ENCODE measurements at regions of chr11 and their contacts with region 1.

Region 1: DNA sequence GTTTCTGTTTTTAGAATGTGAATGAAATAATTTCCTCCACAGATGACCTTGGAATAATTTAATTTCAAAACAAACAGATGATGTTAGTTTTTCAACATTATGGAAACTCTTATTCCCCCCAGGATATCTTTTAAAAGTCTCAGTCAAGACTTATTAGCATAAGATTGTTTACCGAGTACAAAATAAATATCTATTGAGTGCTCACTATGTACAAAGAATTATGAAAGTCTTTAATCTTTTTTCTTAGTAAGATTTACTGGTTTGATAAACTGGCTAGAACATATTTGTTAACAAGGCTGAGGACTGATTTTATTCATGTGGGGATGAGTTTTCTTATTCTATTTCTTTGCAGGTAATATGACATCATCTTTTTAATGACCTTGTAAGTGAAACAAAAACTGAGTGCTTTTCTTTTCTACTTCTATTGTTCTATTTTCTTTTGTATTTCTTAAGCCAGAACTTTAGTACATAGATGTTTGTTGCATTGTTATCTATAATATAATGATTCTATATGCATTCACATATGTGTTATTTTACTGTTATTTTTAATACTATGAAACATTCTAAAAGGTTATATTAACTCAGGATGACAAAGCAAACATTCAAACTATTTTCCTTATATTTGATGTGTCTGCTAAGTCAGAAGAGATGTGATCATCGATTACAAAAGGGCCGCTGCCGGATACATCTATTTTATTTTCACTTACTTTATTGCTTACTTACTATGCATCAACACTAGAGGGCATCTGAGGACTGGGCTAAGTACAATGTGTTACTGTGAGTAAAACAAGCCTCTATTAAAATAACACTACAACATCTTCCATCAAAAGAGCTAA is 111.0 kb upstream of the ARHGAP42 start:
- DNase-seq: no peak
- H3K4me3 ChIP-seq: no peak overlapping the region
- H3K27ac ChIP-seq: no peak overlapping the region
- H3K27me3 ChIP-seq: no peaks in the 10 kb centered on the region
- CTCF ChIP-seq: peak; percentile 90

Region 2: GRCh38 chr11:99960536-99960935 is 615.6 kb before region 1 on chr11:
- CTCF ChIA-PET with region 1: no interaction called
- POLR2A ChIA-PET with region 1: no interaction called
- DNase-seq: no peak
- H3K4me3 ChIP-seq: no peak overlapping the region
- H3K27ac ChIP-seq: no peak overlapping the region
- H3K27me3 ChIP-seq: no peaks in the 10 kb centered on the region
- CTCF ChIP-seq: no peak

Region 3: GRCh38 chr11:100592619-100593260 is 16.7 kb after region 1 on chr11:
- CTCF ChIA-PET with region 1: interaction called, 17 read pairs
- POLR2A ChIA-PET with region 1: no interaction called
- DNase-seq: peak; percentile 41
- H3K4me3 ChIP-seq: no peak overlapping the region
- H3K27ac ChIP-seq: peak overlapping the region; percentile 59
- H3K27me3 ChIP-seq: no peaks in the 10 kb centered on the region
- CTCF ChIP-seq: no peak

Region 4: DNA sequence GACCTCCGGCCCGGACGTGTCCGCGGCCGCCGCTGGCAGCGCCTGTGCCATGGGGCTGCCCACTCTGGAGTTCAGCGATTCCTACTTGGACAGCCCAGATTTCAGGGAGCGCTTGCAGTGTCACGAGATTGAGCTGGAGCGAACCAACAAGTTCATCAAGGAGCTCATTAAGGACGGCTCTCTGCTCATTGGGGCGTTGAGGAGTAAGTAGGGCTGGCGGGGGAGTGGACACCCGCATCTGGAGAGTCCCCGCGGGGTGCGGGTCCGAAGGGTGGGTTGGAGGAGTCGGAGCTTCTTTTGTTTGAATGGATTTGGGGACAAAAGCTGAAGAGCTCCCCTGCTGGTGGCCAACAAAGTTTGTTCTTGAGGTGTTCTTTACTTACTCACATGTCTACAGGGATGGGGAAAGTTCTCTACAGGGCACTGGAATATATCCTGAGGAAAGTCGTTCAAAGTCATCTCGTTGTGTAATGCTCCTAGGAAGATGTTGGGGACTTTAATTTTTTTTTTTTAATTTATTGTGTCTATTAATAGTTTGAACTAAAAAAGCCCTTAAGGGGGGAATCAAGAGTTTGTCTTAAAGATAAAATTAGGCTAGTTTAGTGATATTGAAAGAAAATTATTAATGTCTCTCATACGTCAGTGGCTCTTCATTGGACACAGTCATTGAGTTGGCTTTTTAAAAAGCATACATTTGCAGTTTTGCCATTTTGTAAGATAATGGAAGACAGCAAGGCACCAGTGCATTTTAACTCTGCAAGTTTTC is 111.7 kb after region 1 on chr11:
- CTCF ChIA-PET with region 1: interaction called, 93 read pairs
- POLR2A ChIA-PET with region 1: no interaction called
- DNase-seq: peak; percentile 45
- H3K4me3 ChIP-seq: peak overlapping the region; percentile 79
- H3K27ac ChIP-seq: peak overlapping the region; percentile 68
- H3K27me3 ChIP-seq: no peaks in the 10 kb centered on the region
- CTCF ChIP-seq: peak; percentile 81

Region 5: GRCh38 chr11:100855466-100856067 is 279.5 kb after region 1 on chr11:
- CTCF ChIA-PET with region 1: interaction called, 34 read pairs
- POLR2A ChIA-PET with region 1: no interaction called
- DNase-seq: no peak
- H3K4me3 ChIP-seq: no peak overlapping the region
- H3K27ac ChIP-seq: no peak overlapping the region
- H3K27me3 ChIP-seq: no peaks in the 10 kb centered on the region
- CTCF ChIP-seq: peak; percentile 64

Region 6: DNA sequence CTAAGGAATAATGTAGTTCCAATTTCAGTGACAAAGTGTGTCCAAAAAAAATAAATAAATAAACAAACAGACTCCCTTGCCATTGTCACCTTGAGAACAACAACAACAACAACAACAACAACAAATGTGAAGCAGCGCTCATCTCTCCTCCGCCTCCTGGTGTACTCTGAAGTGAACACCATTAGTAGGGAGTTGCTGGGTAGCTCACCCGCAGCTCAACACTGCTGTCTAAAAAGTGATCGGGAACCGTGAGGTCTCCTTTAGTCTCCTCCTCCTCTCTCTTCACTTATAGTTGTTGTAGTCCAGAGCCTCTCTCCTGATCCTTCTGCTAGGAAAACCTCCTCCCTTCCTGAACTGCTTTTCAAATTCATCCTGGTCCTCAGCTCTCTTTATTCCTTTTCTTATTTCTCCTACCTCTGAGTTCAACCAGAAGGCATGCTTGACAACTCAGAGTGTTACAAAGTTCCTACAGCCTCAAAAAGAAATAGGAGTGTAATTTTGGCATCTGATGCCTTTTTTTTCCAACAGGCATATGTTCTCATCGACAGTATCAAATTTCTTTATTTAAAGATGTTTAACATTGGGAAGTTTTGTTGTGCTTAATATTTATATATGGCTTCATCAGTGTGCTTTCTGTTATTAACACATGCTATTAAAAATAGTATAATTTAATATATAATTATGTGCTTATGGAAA is 338.5 kb after region 1 on chr11:
- CTCF ChIA-PET with region 1: interaction called, 11 read pairs
- POLR2A ChIA-PET with region 1: no interaction called
- DNase-seq: no peak
- H3K4me3 ChIP-seq: no peak overlapping the region
- H3K27ac ChIP-seq: no peak overlapping the region
- H3K27me3 ChIP-seq: no peaks in the 10 kb centered on the region
- CTCF ChIP-seq: no peak

Region 7: GRCh38 chr11:100939571-100939970 is 363.5 kb after region 1 on chr11:
- CTCF ChIA-PET with region 1: interaction called, 147 read pairs
- POLR2A ChIA-PET with region 1: no interaction called
- DNase-seq: no peak
- H3K4me3 ChIP-seq: no peak overlapping the region
- H3K27ac ChIP-seq: no peak overlapping the region
- H3K27me3 ChIP-seq: no peaks in the 10 kb centered on the region
- CTCF ChIP-seq: no peak

Region 8: GRCh38 chr11:101166038-101166437 is 590.0 kb after region 1 on chr11:
- CTCF ChIA-PET with region 1: no interaction called
- POLR2A ChIA-PET with region 1: no interaction called
- DNase-seq: no peak
- H3K4me3 ChIP-seq: no peak overlapping the region
- H3K27ac ChIP-seq: no peak overlapping the region
- H3K27me3 ChIP-seq: no peaks in the 10 kb centered on the region
- CTCF ChIP-seq: no peak

Measured in AG04450 (cell line).